ENCODE measurements at regions of chr11 and their contacts with region 1.

Region 1: GRCh38 chr11:73141848-73142286 is 251 bp downstream of the FCHSD2 start:
- DNase-seq: peak; percentile 47
- ATAC-seq: peak; percentile 36
- H3K4me3 ChIP-seq: peak overlapping the region; percentile 78 to 99 (median 91)
- H3K27ac ChIP-seq: peak overlapping the region; percentile 95
- H3K4me1 ChIP-seq: peaks cover 65% of the 10 kb centered on the region
- H3K27me3 ChIP-seq: no peaks in the 10 kb centered on the region; a peak in 1 of 5 replicates
- CTCF ChIP-seq: no peak
- EP300 ChIP-seq: no peak
- POLR2A ChIP-seq: peak in 1 of 2 experiments; percentile 37; a peak in 2 of 4 replicates
- RAD21 ChIP-seq: no peak

Region 2: GRCh38 chr11:73085189-73085875 is 56.5 kb before region 1 on chr11:
- CTCF ChIA-PET with region 1: no interaction called
- POLR2A ChIA-PET with region 1: no interaction called
- in situ Hi-C with region 1: no loop called
- intact Hi-C with region 1: no loop called
- DNase-seq: peak; percentile 7
- ATAC-seq: no peak
- H3K4me3 ChIP-seq: no peak overlapping the region
- H3K27ac ChIP-seq: no peak overlapping the region
- H3K4me1 ChIP-seq: peaks cover 24% of the 10 kb centered on the region
- H3K27me3 ChIP-seq: no peaks in the 10 kb centered on the region
- CTCF ChIP-seq: no peak
- EP300 ChIP-seq: no peak
- POLR2A ChIP-seq: no peak
- RAD21 ChIP-seq: no peak

Region 3: GRCh38 chr11:73157053-73158010 is 15.5 kb after region 1 on chr11:
- CTCF ChIA-PET with region 1: no interaction called
- POLR2A ChIA-PET with region 1: interaction called, 152 read pairs
- in situ Hi-C with region 1: no loop called
- intact Hi-C with region 1: loop called (anchors 1 kb)
- DNase-seq: peak; percentile 59
- ATAC-seq: peak; percentile 29
- H3K4me3 ChIP-seq: peak overlapping the region; percentile 9 to 62 (median 23); a peak in 5 of 6 replicates
- H3K27ac ChIP-seq: peak overlapping the region; percentile 74
- H3K4me1 ChIP-seq: peaks cover 98% of the 10 kb centered on the region
- H3K27me3 ChIP-seq: no peaks in the 10 kb centered on the region
- CTCF ChIP-seq: peak; percentile 4; the same call in 1 of the 2 replicates
- EP300 ChIP-seq: no peak
- POLR2A ChIP-seq: no peak
- RAD21 ChIP-seq: no peak

Region 4: DNA sequence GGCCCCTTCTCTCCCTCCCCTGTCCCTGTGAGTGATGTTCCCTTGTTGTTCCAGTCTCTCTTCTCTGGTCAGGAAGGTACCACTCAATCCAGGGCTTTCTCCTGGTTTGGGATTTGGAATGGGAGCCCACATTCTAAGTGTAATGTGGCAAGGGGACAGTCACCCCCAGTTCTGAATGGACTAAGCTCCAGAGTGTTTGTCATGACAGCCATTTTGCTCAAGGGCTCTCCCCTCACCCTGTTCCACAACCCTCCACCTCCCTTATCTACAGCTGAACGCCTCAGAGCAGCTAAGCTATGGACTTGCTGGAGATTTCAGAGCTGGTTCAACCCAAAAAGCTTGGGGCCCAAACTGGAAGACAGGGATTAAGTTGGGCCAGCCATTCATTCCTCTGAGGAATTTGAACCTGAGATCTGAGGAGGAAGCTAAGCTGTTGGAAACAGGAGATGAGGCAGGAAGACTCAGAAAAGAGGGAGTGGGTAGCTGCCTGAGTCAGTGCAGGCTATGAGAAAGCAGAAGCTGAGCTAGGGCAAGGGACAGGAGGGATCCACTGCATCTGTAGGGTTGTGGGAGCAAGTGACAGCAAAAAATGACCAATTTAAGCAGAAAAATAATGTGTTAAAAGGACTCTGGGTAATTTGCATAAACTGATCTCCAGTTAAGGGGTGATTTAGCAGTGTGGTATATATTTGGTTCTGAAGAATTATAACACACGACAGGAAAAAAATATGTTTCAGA is 23.1 kb after region 1 on chr11:
- CTCF ChIA-PET with region 1: interaction called, 3 read pairs
- POLR2A ChIA-PET with region 1: interaction called, 152 read pairs
- in situ Hi-C with region 1: no loop called
- intact Hi-C with region 1: no loop called
- DNase-seq: no peak
- ATAC-seq: peak; percentile 14
- H3K4me3 ChIP-seq: no peak overlapping the region
- H3K27ac ChIP-seq: peak overlapping the region; percentile 65
- H3K4me1 ChIP-seq: peaks cover 97% of the 10 kb centered on the region
- H3K27me3 ChIP-seq: no peaks in the 10 kb centered on the region
- CTCF ChIP-seq: no peak
- EP300 ChIP-seq: no peak
- POLR2A ChIP-seq: no peak
- RAD21 ChIP-seq: no peak

Region 5: GRCh38 chr11:73170140-73170539 is 28.3 kb after region 1 on chr11:
- CTCF ChIA-PET with region 1: interaction called, 3 read pairs
- POLR2A ChIA-PET with region 1: interaction called, 133 read pairs
- in situ Hi-C with region 1: loop called (anchors 5 kb)
- intact Hi-C with region 1: loop called (anchors 1 kb)
- DNase-seq: no peak
- ATAC-seq: peak; percentile 45
- H3K4me3 ChIP-seq: no peak overlapping the region
- H3K27ac ChIP-seq: no peak overlapping the region
- H3K4me1 ChIP-seq: peaks cover 98% of the 10 kb centered on the region
- H3K27me3 ChIP-seq: no peaks in the 10 kb centered on the region
- CTCF ChIP-seq: no peak
- EP300 ChIP-seq: no peak
- POLR2A ChIP-seq: no peak
- RAD21 ChIP-seq: no peak